ENCODE measurements at regions of chr7 and their contacts with region 1.

Region 1: GRCh38 chr7:133252858-133253518 is at the start of gene EXOC4:
- DNase-seq: peak; percentile 97
- H3K4me3 ChIP-seq: peak within 1 kb of the TSS; percentile 83 to 96 (median 90)
- H3K27ac ChIP-seq: peak within 1 kb of the TSS; percentile 81 to 92 (median 88)
- H3K4me1 ChIP-seq: peaks cover 0 to 26% (median 19%) of the 10 kb centered on the region in 4 donors
- H3K27me3 ChIP-seq: no peaks in the 10 kb centered on the region
- CTCF ChIP-seq: no peak
- EP300 ChIP-seq: no peak
- POLR2A ChIP-seq: no peak
- total RNA-seq, gene EXOC4: 50.7 to 76.7 (median 54.9) TPM

Region 2: DNA sequence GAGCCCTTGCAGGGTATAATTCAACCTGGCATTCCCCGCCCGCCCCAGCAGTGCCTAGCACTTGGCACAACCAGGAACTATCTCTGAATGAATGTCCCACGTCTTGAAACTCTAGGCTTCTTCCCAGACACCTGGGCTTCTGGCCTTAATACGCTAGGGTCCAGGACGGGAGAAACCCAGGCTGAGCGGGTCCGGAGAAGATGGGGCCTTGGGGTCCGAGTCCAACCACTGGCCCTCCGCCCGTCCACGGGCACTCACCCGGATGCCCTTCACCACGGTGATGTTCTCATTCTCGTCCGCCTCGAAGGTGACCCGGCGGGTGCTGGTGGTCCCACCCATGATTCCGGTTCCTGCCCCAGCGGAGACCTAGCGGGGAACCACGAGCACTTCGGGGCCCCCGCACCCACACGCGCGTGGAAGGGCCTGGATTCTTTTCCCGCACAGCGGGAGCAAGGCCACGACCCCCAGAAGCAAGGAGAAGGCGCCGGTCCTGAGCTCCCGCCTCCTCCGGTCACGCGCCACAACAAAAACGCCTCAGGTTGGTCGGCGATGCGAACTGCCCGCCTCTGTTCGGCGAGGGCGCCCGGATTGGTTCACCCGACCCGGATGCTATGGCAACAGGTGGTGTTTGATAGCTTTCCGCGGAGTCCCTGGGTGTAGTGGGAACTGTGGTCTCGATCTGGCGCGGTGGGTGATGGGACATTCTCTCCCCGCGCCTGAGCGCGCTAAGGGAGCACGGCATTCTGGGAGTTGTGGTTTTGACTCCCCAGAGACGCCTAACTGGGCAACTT is 171.2 kb before region 1 on chr7 and contains the start of gene CHCHD3:
- intact Hi-C with region 1: loop called (anchors 5 kb)
- DNase-seq: peak; percentile 98
- H3K4me3 ChIP-seq: peak within 1 kb of the TSS; percentile 73 to 96 (median 88)
- H3K27ac ChIP-seq: peak within 1 kb of the TSS; percentile 77 to 89 (median 88)
- H3K4me1 ChIP-seq: peaks cover 0 to 38% (median 20%) of the 10 kb centered on the region in 4 donors
- H3K27me3 ChIP-seq: no peaks in the 10 kb centered on the region
- CTCF ChIP-seq: no peak
- EP300 ChIP-seq: no peak
- POLR2A ChIP-seq: peak; percentile 42 to 56
- total RNA-seq, gene CHCHD3: 61.7 to 71.7 (median 63.0) TPM

Region 3: GRCh38 chr7:133109816-133110215 is 143.2 kb before region 1 on chr7:
- intact Hi-C with region 1: no loop called
- DNase-seq: no peak
- H3K4me3 ChIP-seq: no peak overlapping the region
- H3K27ac ChIP-seq: no peak overlapping the region
- H3K4me1 ChIP-seq: no peaks in the 10 kb centered on the region
- H3K27me3 ChIP-seq: no peaks in the 10 kb centered on the region
- CTCF ChIP-seq: no peak
- EP300 ChIP-seq: no peak
- POLR2A ChIP-seq: no peak

Region 4: GRCh38 chr7:134126966-134127848 is 874.2 kb after region 1 on chr7 and contains the start of gene LRGUK:
- intact Hi-C with region 1: loop called (anchors 5 kb)
- DNase-seq: peak; percentile 90
- H3K4me3 ChIP-seq: peak within 1 kb of the TSS; percentile 51 to 66 (median 60)
- H3K27ac ChIP-seq: no peak within 1 kb of the TSS
- H3K4me1 ChIP-seq: peaks cover 0 to 12% (median 5%) of the 10 kb centered on the region in 4 donors
- H3K27me3 ChIP-seq: no peaks in the 10 kb centered on the region
- CTCF ChIP-seq: no peak
- EP300 ChIP-seq: no peak
- POLR2A ChIP-seq: no peak
- total RNA-seq, gene LRGUK: 0.28 to 0.71 (median 0.37) TPM

Measured in sigmoid colon (tissue), 7 donors.